Endothelial cell of umbilical vein (primary cell): ENCODE measurements at regions of chr15 and their contacts with region 1.

Region 1: DNA sequence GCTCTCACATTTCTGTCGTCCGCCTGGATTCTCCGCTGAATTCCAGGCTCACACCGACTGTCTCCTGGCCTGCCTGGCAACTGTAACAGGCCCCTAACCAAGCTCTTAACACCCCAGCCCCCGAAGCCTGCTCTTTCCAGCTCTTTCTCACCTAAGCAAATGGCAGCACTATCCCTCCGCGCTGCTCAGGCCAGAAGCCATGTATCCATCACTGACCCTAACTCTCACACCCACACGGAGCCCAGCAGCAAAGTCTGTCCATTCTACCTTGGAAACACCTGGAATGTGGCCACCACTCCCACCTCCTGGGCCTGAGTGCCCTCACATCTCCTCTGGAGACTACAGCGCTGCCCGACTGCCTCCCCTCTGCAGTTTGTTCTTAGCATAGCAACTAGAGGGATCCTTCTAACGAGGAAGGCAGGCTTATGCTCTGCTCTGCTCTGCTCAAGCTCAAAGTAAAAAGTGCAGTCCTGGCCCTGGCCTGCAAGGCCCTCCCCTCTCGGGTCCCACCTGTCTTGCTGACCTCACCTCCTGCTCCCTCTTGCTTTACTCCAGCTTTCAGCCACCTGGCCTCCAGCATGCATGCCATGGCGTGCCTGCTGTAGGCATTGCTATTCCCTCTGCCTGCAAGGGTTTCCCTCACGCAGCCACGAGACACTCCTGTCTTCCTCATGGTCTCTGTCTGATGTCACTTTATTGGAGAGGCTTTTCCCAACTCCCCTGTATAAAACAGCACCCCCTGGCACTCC is 27.2 kb downstream of the FEM1B start:
- DNase-seq: no peak
- H3K4me3 ChIP-seq: no peak overlapping the region
- H3K27ac ChIP-seq: no peak overlapping the region
- H3K4me1 ChIP-seq: peaks cover 3% of the 10 kb centered on the region
- H3K27me3 ChIP-seq: no peaks in the 10 kb centered on the region
- CTCF ChIP-seq: no peak
- POLR2A ChIP-seq: no peak

Region 2: DNA sequence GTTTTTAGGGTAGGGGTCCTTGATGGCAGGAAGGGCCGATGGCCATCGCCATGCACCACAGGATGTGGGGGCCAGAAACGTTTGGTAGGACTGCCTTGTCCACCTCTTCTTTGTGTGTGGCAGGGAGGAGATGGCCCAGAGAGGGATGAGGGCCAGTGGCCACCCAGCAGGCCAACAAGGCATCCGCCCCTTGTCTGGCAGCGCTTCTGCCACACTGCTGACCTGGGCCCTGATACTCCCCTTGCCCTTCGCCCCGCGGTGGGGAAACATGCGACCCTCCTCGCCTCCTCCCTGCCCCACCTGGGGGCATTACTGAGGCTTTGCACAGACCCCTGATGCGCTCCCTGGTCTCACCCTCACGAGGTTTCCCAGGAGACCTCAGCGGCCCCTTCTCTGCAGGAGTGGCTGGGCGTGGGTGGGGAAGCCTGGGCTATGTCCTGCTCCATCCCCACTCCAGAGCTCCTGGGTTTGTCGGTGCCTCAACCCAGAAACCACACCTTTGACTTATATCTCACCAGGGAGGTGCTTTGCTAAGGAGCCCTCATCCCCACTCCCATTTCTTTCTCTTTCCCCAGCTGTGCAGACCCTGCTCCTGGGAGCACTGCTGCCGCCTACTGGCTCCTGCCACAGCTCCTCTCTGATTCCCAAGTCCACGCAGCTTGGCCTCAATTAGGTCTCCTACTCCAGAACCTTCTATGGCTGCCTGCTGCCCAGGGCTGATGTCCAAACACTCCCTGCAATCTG is 11.5 kb after region 1 on chr15:
- CTCF ChIA-PET with region 1: interaction called, 26 read pairs
- POLR2A ChIA-PET with region 1: no interaction called
- dilution Hi-C with region 1: no loop called
- intact Hi-C with region 1: no loop called
- DNase-seq: peak; percentile 29
- H3K4me3 ChIP-seq: no peak overlapping the region
- H3K27ac ChIP-seq: no peak overlapping the region
- H3K4me1 ChIP-seq: peaks cover 6% of the 10 kb centered on the region
- H3K27me3 ChIP-seq: no peaks in the 10 kb centered on the region
- CTCF ChIP-seq: peak; percentile 19 to 60
- POLR2A ChIP-seq: no peak

Region 3: GRCh38 chr15:68352401-68353062 is 47.8 kb after region 1 on chr15:
- CTCF ChIA-PET with region 1: interaction called, 27 read pairs
- POLR2A ChIA-PET with region 1: no interaction called
- dilution Hi-C with region 1: no loop called
- intact Hi-C with region 1: no loop called
- DNase-seq: peak; percentile 98
- H3K4me3 ChIP-seq: no peak overlapping the region
- H3K27ac ChIP-seq: peak overlapping the region; percentile 97
- H3K4me1 ChIP-seq: peaks cover 20% of the 10 kb centered on the region
- H3K27me3 ChIP-seq: no peaks in the 10 kb centered on the region
- CTCF ChIP-seq: no peak
- POLR2A ChIP-seq: no peak

Region 4: DNA sequence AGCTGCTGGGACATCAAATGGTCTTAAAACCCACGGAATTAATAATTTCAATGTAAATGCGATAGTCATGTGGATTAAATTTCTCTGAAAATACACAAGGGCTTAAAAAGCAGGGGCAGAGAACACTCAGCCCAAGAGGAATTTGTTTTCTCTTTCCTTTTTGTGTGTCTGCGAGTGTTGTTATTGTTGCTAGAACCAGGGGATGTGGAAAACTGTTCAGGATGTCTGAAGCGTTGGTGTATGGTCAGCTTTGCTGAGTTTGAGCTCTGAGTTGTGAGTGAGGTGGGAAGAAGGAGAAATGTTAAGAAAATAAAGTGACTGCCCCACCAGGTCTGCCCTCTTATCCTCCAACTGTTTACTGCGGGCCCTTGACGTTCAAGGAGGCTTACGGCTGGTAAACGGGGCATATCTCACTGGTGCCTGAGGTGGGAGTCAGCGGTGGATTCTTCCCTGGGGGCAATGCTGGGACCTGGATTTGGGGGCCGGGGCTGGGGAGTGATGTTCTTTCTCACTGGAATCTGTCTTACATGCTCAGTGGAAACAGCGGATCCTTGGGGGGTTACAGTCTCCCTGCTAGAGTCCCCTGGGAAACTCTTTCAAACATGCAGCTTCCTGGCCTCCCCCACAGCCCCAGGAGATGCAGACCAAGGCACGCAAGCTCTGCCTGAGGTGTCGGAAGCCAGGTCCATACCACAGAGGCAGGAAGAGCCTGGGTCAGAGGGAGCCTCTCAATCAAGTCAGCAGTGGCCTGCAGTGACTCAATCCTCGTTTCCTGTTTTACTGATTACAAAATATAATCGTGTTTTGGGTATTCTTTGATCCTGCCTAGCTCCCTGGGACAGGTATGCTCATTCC is 85.4 kb after region 1 on chr15:
- CTCF ChIA-PET with region 1: interaction called, 35 read pairs
- POLR2A ChIA-PET with region 1: no interaction called
- dilution Hi-C with region 1: no loop called
- intact Hi-C with region 1: no loop called
- DNase-seq: peak; percentile 80
- H3K4me3 ChIP-seq: no peak overlapping the region
- H3K27ac ChIP-seq: peak overlapping the region; percentile 78
- H3K4me1 ChIP-seq: peaks cover 27% of the 10 kb centered on the region
- H3K27me3 ChIP-seq: no peaks in the 10 kb centered on the region
- CTCF ChIP-seq: no peak
- POLR2A ChIP-seq: peak; percentile 47

Region 5: GRCh38 chr15:68543165-68544008 is 238.6 kb after region 1 on chr15:
- CTCF ChIA-PET with region 1: interaction called, 128 read pairs
- POLR2A ChIA-PET with region 1: no interaction called
- dilution Hi-C with region 1: no loop called
- intact Hi-C with region 1: loop called (anchors 2 kb)
- DNase-seq: peak; percentile 95
- H3K4me3 ChIP-seq: no peak overlapping the region
- H3K27ac ChIP-seq: peak overlapping the region; percentile 74
- H3K4me1 ChIP-seq: peaks cover 18% of the 10 kb centered on the region
- H3K27me3 ChIP-seq: peaks cover 0 to 2% of the 10 kb centered on the region in 2 experiments
- CTCF ChIP-seq: no peak
- POLR2A ChIP-seq: peak; percentile 52

Region 6: DNA sequence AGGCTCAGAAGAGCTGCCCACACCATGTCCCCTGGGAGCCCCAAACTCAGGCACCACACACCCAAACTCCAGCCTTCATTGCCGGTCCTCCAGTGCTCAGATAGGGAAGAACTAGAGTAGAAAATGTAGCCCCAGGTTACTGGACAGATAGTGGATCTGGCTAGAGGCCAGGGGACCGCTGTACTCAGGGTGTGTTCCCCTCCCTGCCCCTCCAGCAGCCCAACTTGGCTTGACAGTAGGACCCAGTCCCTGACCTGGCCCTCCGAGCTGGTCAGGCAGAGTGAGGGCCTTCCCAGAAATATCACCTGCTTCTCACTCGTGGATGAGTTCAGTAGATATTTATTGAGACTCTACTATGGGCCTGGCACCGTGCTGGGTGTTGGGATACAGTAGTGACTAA is 374.0 kb after region 1 on chr15:
- CTCF ChIA-PET with region 1: interaction called, 49 read pairs
- POLR2A ChIA-PET with region 1: no interaction called
- dilution Hi-C with region 1: no loop called
- intact Hi-C with region 1: loop called (anchors 1 kb)
- DNase-seq: no peak
- H3K4me3 ChIP-seq: no peak overlapping the region
- H3K27ac ChIP-seq: no peak overlapping the region
- H3K4me1 ChIP-seq: no peaks in the 10 kb centered on the region
- H3K27me3 ChIP-seq: peaks cover 0 to 4% of the 10 kb centered on the region in 2 experiments
- CTCF ChIP-seq: no peak
- POLR2A ChIP-seq: no peak